GM12878 (cell line): ENCODE measurements at regions of chr3 and their contacts with region 1.

Region 1: DNA sequence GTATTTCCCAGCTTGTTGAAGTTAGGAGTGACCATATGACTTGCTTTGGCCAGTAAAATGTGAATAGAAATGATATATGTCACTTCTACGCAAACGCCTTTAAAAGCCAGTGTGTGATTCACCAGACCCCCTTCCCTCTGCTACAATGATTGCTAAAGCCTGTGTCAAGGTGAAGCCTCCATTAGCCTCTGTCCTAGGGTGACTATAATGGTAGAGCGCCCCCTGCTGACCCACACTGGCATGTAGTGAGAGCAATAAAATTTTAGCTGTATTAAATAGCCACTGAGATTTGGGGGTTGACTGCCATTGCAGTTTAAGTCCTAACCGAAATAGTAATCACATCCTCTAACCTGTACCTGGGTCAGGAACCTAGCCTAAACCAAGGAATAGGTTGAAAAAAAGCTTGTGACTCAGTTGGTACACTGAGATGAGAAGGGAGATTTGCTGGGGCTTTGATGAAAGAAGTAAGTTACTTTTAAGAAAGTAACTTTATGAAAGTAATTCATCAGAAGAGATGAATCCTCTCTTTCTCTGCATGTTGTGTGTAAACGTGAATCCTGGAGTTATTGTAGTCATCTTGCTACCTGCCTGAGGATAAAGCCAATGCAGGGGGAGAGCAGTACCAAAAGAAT is 52.6 kb downstream of the GTF2E1 start:
- DNase-seq: peak; percentile 51
- ATAC-seq: peak; percentile 100
- H3K4me3 ChIP-seq: no peak overlapping the region
- H3K27ac ChIP-seq: no peak overlapping the region
- H3K4me1 ChIP-seq: peaks cover 5% of the 10 kb centered on the region
- H3K27me3 ChIP-seq: no peaks in the 10 kb centered on the region
- CTCF ChIP-seq: peak; percentile 78 to 91 (median 88); a peak in 5 of 6 replicates
- EP300 ChIP-seq: no peak
- POLR2A ChIP-seq: no peak
- RAD21 ChIP-seq: peak; percentile 98

Region 2: DNA sequence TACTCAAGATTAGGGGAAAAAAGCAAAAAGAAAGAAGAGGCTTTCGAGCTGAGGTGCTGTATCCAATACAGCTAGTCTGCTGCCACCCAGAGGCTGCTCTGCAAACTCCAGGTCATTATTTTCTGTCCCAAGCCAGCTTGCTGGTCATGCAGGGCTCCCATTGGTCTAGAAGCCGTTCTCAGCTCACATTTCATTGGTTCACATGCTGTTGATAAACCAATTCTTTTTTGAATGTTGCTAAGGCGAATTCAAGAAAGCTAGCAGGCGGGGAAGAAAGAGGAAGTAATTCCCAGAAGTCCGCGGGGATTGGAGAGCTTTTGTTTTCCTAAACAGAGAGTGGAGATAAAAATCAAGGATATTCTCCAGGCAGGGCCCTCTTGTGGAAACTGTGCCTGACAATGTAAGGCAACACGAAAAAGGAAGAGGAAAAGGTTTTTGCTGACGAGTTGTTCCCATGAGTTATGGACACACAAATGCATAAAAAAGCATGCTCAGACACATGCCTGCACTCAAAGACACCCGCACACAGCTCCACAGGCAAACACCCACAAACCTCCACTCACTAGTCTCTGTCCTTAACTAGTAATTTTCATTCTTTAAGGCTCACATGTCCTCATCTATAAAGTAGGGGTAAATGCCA is 377.7 kb before region 1 on chr3:
- CTCF ChIA-PET with region 1: interaction called, 24 read pairs
- POLR2A ChIA-PET with region 1: no interaction called
- RAD21 ChIA-PET with region 1: interaction called, 8 read pairs
- SMC1A ChIA-PET with region 1: interaction called, 17 read pairs
- in situ Hi-C with region 1: no loop called
- intact Hi-C with region 1: loop called (anchors 5 kb)
- DNase-seq: peak; percentile 90
- ATAC-seq: peak; percentile 99
- H3K4me3 ChIP-seq: peak overlapping the region; percentile 66; the same call in 1 of the 2 replicates
- H3K27ac ChIP-seq: no peak overlapping the region
- H3K4me1 ChIP-seq: no peaks in the 10 kb centered on the region; the same call in 1 of the 2 replicates
- H3K27me3 ChIP-seq: peaks cover 0 to 5% of the 10 kb centered on the region in 2 experiments; a peak in 2 of 4 replicates
- CTCF ChIP-seq: peak; percentile 69 to 97 (median 93); a peak in 5 of 6 replicates
- EP300 ChIP-seq: no peak
- POLR2A ChIP-seq: no peak
- RAD21 ChIP-seq: peak; percentile 85

Region 3: GRCh38 chr3:120596116-120596852 is 198.8 kb before region 1 on chr3 and contains the start of gene NDUFB4:
- CTCF ChIA-PET with region 1: interaction called, 23 read pairs
- POLR2A ChIA-PET with region 1: interaction called, 3 read pairs
- RAD21 ChIA-PET with region 1: interaction called, 12 read pairs
- SMC1A ChIA-PET with region 1: interaction called, 32 read pairs
- in situ Hi-C with region 1: loop called (anchors 10 kb)
- intact Hi-C with region 1: no loop called
- DNase-seq: peak; percentile 98
- ATAC-seq: peak; percentile 96
- H3K4me3 ChIP-seq: peak within 1 kb of the TSS; percentile 98
- H3K27ac ChIP-seq: peak within 1 kb of the TSS; percentile 97
- H3K4me1 ChIP-seq: no peaks in the 10 kb centered on the region; the same call in 1 of the 2 replicates
- H3K27me3 ChIP-seq: no peaks in the 10 kb centered on the region
- CTCF ChIP-seq: no peak
- EP300 ChIP-seq: no peak
- POLR2A ChIP-seq: peak; percentile 90
- RAD21 ChIP-seq: no peak
- polyA plus RNA-seq, gene NDUFB4: 732 to 864 TPM

Region 4: DNA sequence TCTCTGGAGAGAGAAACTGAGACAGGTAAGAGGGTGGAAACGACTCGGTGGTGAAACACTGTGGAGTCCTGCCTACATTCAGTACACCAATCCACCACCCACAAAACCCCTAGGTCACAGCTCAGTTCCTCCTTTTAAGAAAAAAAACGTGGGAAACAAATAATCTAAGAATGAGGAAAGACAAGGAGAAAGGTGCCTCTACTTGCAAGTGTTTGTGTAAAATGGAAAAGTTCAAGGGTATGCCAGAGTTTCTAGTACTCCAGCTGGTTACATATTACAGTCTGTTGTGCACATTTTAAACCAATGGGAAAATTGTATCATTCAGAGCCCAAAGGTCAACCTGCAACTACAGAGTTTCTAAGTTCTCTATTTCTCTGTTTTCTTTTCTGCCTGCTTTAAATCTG is 145.3 kb before region 1 on chr3:
- CTCF ChIA-PET with region 1: interaction called, 13 read pairs
- POLR2A ChIA-PET with region 1: no interaction called
- RAD21 ChIA-PET with region 1: no interaction called
- SMC1A ChIA-PET with region 1: interaction called, 5 read pairs
- in situ Hi-C with region 1: no loop called
- intact Hi-C with region 1: no loop called
- DNase-seq: no peak
- ATAC-seq: peak; percentile 36; the same call in 1 of the 3 replicates
- H3K4me3 ChIP-seq: no peak overlapping the region
- H3K27ac ChIP-seq: no peak overlapping the region
- H3K4me1 ChIP-seq: no peaks in the 10 kb centered on the region
- H3K27me3 ChIP-seq: no peaks in the 10 kb centered on the region
- CTCF ChIP-seq: no peak
- EP300 ChIP-seq: no peak
- POLR2A ChIP-seq: no peak
- RAD21 ChIP-seq: no peak

Region 5: GRCh38 chr3:120763601-120764000 is 31.5 kb before region 1 on chr3:
- CTCF ChIA-PET with region 1: interaction called, 14 read pairs
- POLR2A ChIA-PET with region 1: no interaction called
- RAD21 ChIA-PET with region 1: interaction called, 8 read pairs
- SMC1A ChIA-PET with region 1: interaction called, 27 read pairs
- in situ Hi-C with region 1: no loop called
- intact Hi-C with region 1: no loop called
- DNase-seq: no peak
- ATAC-seq: peak; percentile 92
- H3K4me3 ChIP-seq: peak overlapping the region; percentile 31; the same call in 1 of the 2 replicates
- H3K27ac ChIP-seq: peak overlapping the region; percentile 65
- H3K4me1 ChIP-seq: peaks cover 18% of the 10 kb centered on the region
- H3K27me3 ChIP-seq: no peaks in the 10 kb centered on the region
- CTCF ChIP-seq: no peak
- EP300 ChIP-seq: no peak
- POLR2A ChIP-seq: no peak
- RAD21 ChIP-seq: no peak